Panc1 (cell line): ENCODE measurements at regions of chr15 and their contacts with region 1.

Region 1: DNA sequence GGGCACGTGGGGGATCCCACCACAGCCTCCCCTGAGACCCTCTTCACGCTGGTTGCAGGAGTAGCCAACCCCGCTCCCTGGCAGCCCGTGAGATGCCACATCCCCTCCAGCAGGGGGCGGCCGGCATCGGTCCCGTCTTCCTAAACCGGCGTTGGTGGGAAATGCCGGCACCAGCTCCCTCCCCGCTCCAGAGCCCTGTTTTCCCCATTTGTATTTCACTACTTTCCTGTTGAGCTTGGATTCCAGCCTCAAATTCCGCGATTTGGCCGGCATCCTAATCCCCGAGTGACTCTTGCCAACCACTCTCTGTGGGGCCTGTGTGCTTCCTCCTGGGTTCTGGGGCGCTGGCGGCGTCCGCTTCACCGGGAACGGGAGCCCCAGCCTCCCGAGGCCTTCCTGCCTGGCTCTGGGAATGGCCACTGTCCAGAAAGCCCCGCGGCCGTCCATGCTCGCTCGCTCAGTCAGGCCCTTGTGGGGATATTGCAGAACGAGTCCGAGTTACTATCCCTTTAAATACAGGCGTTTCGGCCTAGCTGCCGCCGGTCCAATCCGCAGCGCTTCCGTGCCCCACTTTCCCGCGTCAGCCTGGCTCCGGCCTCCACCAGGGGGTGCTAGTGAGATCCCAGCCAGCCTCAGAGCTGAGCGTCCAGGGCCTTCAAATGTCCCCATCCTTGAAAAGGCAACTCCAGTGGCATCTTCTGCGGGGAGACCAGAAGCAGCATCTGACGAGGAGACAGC is 8.1 kb upstream of the ADAMTS17 start:
- DNase-seq: peak; percentile 66
- ATAC-seq: peak; percentile 99
- H3K4me3 ChIP-seq: peak overlapping the region; percentile 86 to 89
- H3K27ac ChIP-seq: peak overlapping the region; percentile 88
- H3K4me1 ChIP-seq: no peaks in the 10 kb centered on the region; the same call in 1 of the 2 replicates
- H3K27me3 ChIP-seq: peaks cover 5% of the 10 kb centered on the region
- CTCF ChIP-seq: peak; percentile 97

Region 2: DNA sequence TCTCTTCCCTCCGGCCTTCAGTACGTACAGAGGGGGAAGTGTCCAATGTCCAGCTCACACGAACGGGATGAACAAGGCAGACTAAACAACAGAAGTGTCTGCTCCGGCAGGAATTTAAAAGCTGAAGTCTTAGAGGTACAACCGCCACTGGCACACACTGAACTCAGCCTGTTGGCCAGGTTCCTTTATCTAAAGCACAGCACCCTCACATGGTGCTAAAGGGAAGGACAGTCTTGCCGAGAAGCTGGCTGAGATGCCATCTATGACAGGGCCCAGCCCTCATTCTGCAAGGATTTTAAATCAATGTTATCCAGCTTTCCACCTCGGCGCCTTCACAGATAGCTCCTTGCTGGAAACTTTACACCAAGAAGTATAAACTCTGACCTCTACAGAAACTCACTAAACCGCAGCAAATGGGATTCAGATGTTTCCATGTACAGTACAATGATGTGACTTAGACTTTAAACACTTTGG is 10.9 kb before region 1 on chr15:
- CTCF ChIA-PET with region 1: interaction called, 11 read pairs
- POLR2A ChIA-PET with region 1: no interaction called
- in situ Hi-C with region 1: no loop called
- intact Hi-C with region 1: no loop called
- DNase-seq: no peak
- ATAC-seq: peak; percentile 64
- H3K4me3 ChIP-seq: no peak overlapping the region
- H3K27ac ChIP-seq: no peak overlapping the region
- H3K4me1 ChIP-seq: no peaks in the 10 kb centered on the region
- H3K27me3 ChIP-seq: peaks cover 14% of the 10 kb centered on the region
- CTCF ChIP-seq: peak; percentile 77

Region 3: GRCh38 chr15:100383302-100384107 is 33.6 kb after region 1 on chr15:
- CTCF ChIA-PET with region 1: interaction called, 13 read pairs
- POLR2A ChIA-PET with region 1: no interaction called
- in situ Hi-C with region 1: no loop called
- intact Hi-C with region 1: no loop called
- DNase-seq: no peak
- ATAC-seq: peak; percentile 80
- H3K4me3 ChIP-seq: no peak overlapping the region
- H3K27ac ChIP-seq: no peak overlapping the region
- H3K4me1 ChIP-seq: no peaks in the 10 kb centered on the region
- H3K27me3 ChIP-seq: no peaks in the 10 kb centered on the region
- CTCF ChIP-seq: peak; percentile 67

Region 4: GRCh38 chr15:100572362-100572983 is 222.6 kb after region 1 on chr15:
- CTCF ChIA-PET with region 1: interaction called, 13 read pairs
- POLR2A ChIA-PET with region 1: no interaction called
- in situ Hi-C with region 1: no loop called
- intact Hi-C with region 1: loop called (anchors 2 kb)
- DNase-seq: no peak
- ATAC-seq: no peak
- H3K4me3 ChIP-seq: no peak overlapping the region
- H3K27ac ChIP-seq: no peak overlapping the region
- H3K4me1 ChIP-seq: no peaks in the 10 kb centered on the region
- H3K27me3 ChIP-seq: no peaks in the 10 kb centered on the region
- CTCF ChIP-seq: peak; percentile 48; the same call in 1 of the 2 replicates

Region 5: DNA sequence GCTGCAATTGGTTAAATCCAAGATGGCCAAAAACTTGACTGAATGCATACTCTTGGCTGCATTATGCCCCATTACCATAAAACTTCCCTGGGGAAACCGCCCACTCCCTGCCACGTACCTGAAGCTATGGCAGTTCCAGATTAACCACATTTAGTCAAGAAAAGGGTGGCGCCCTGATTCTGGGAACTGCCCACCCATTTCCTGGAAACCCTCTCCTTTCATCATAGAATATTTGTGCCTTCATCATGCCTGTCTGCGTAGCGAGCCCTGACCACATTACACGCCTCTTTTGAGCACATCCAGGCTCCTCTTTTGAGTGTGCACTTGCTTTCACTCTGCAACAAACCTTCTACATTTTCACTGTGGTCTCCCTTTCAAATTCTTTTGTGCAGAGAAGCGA is 246.9 kb after region 1 on chr15:
- CTCF ChIA-PET with region 1: interaction called, 5 read pairs
- POLR2A ChIA-PET with region 1: no interaction called
- in situ Hi-C with region 1: no loop called
- intact Hi-C with region 1: loop called (anchors 10 kb)
- DNase-seq: no peak
- ATAC-seq: no peak
- H3K4me3 ChIP-seq: no peak overlapping the region
- H3K27ac ChIP-seq: no peak overlapping the region
- H3K4me1 ChIP-seq: peaks cover 9% of the 10 kb centered on the region
- H3K27me3 ChIP-seq: no peaks in the 10 kb centered on the region
- CTCF ChIP-seq: no peak

Region 6: GRCh38 chr15:100686021-100686724 is 336.3 kb after region 1 on chr15:
- CTCF ChIA-PET with region 1: no interaction called
- POLR2A ChIA-PET with region 1: no interaction called
- in situ Hi-C with region 1: no loop called
- intact Hi-C with region 1: no loop called
- DNase-seq: no peak
- ATAC-seq: no peak
- H3K4me3 ChIP-seq: no peak overlapping the region
- H3K27ac ChIP-seq: no peak overlapping the region
- H3K4me1 ChIP-seq: no peaks in the 10 kb centered on the region
- H3K27me3 ChIP-seq: no peaks in the 10 kb centered on the region
- CTCF ChIP-seq: no peak